Astrocyte of the cerebellum (primary cell): ENCODE measurements at regions of chr2 and their contacts with region 1.

Region 1: GRCh38 chr2:20326163-20326780 is 24.4 kb downstream of the PUM2 start:
- DNase-seq: peak; percentile 9
- H3K4me3 ChIP-seq: no peak overlapping the region
- CTCF ChIP-seq: peak; percentile 93

Region 2: DNA sequence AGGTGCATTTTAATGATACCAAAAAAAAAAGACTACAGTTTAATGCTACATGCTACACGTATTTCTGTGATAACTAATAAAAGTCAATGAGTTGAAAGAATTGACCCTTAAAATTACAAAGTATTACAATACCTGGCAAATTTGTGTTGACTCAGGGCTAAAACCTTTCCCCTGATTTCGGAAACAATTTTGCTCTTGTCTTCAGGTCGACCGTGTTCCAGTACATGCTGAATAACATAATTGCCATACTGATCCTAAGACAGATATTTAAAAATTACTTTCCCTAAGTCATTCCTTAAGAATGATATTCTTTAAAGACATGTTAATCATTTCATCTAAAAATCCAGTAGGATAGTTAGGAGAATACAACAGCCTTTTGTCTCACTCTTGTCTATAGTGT is 71.5 kb before region 1 on chr2:
- in situ Hi-C with region 1: no loop called
- DNase-seq: no peak
- H3K4me3 ChIP-seq: no peak overlapping the region
- CTCF ChIP-seq: no peak

Region 3: GRCh38 chr2:20288642-20289340 is 37.5 kb before region 1 on chr2:
- in situ Hi-C with region 1: loop called (anchors 5 kb)
- DNase-seq: no peak
- H3K4me3 ChIP-seq: no peak overlapping the region
- CTCF ChIP-seq: no peak